ENCODE measurements at regions of chr6 and their contacts with region 1.

Region 1: DNA sequence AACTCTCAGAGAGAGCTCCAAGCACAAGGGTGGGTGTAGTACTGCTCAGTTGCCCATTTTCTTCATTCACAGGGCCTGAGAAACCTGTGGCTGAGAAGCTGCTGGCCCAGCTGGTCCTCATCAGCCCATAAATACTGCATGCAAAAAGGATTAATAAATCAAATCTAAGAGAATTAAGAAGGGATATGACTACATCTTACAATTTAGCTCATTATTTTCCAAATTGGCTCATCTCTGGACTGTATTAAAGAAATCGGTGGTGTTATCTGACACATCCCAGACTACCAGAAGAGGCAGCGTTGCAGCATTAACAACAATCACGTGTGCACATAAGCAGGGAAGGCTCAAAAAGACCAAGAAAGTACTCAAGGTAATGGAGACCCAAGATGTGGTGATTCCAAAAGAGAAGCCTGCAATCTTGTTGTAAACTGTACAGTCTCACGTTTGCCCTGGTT is 90.7 kb downstream of the CD24 start:
- DNase-seq: peak; percentile 36
- ATAC-seq: peak; percentile 48
- H3K4me3 ChIP-seq: no peak overlapping the region
- H3K27ac ChIP-seq: no peak overlapping the region
- H3K4me1 ChIP-seq: peaks cover 50% of the 10 kb centered on the region
- H3K27me3 ChIP-seq: no peaks in the 10 kb centered on the region; a peak in 1 of 5 replicates
- CTCF ChIP-seq: peak; percentile 49
- EP300 ChIP-seq: no peak
- POLR2A ChIP-seq: no peak
- RAD21 ChIP-seq: no peak

Region 2: DNA sequence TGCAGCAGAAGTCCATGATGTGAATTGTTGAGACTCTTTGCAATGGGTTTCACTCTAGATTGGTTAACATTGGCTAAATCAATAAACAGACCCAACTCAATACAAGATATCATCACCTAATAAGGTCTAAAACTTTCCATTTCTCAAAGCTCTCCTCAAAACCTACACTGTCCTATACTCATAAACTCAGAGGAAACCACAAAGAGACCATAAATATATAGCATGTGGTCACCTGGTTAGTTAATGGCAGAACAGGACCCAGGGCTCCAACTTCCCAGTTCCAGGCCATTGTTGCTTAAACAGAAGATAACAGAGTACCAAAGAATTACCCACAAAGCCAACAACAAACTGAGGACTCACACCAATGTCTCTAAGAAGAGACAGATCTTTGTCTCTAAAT is 266.5 kb before region 1 on chr6:
- CTCF ChIA-PET with region 1: no interaction called
- POLR2A ChIA-PET with region 1: no interaction called
- in situ Hi-C with region 1: no loop called
- intact Hi-C with region 1: no loop called
- DNase-seq: no peak
- ATAC-seq: no peak
- H3K4me3 ChIP-seq: no peak overlapping the region
- H3K27ac ChIP-seq: no peak overlapping the region
- H3K4me1 ChIP-seq: peaks cover 52% of the 10 kb centered on the region
- H3K27me3 ChIP-seq: no peaks in the 10 kb centered on the region
- CTCF ChIP-seq: no peak
- EP300 ChIP-seq: no peak
- POLR2A ChIP-seq: no peak
- RAD21 ChIP-seq: no peak

Region 3: DNA sequence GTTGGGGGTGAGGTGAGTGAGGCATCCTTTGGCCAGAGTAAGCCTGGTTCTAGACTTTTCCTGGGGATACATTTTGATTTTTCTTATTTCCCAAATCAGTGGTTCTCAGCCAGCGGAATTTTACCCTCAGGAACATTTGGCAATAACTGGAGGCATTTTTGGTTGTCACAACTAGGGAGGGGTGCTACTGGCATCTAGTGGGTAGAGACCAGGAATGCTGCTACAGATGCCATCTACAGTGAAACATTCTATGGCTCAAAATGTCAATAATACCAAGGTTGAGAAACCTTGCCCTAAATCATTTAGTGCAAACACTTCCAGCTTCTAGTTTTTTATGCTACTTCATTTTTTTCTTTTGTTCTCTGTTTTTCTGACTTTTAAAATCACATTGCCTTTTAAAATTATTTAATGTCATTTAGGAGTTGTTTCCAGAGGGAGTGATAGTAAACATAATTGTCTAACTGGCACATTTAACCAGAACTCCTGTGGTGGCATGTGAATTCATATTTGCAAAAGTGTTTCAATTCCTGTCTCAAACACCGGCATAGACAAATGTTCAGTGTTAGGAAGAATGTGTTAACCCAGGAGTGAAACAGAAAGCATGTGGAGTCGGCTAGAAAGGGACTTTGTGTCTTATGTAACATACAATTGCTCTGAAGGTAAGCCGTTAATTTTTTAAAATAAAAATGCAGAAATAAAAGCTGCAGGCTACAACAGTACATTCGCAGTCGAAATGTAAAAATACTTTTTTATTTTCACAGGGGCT is 195.5 kb before region 1 on chr6:
- CTCF ChIA-PET with region 1: no interaction called
- POLR2A ChIA-PET with region 1: no interaction called
- in situ Hi-C with region 1: no loop called
- intact Hi-C with region 1: loop called (anchors 10 kb)
- DNase-seq: peak; percentile 63
- ATAC-seq: peak; percentile 78
- H3K4me3 ChIP-seq: peak overlapping the region in 2 of 3 experiments; percentile 34 to 55; a peak in 3 of 6 replicates
- H3K27ac ChIP-seq: peak overlapping the region; percentile 46
- H3K4me1 ChIP-seq: peaks cover 15% of the 10 kb centered on the region
- H3K27me3 ChIP-seq: no peaks in the 10 kb centered on the region
- CTCF ChIP-seq: peak; percentile 50
- EP300 ChIP-seq: no peak
- POLR2A ChIP-seq: no peak
- RAD21 ChIP-seq: 0 out of 2 replicates have a peak, but pooled peaks have one; percentile 13

Region 4: DNA sequence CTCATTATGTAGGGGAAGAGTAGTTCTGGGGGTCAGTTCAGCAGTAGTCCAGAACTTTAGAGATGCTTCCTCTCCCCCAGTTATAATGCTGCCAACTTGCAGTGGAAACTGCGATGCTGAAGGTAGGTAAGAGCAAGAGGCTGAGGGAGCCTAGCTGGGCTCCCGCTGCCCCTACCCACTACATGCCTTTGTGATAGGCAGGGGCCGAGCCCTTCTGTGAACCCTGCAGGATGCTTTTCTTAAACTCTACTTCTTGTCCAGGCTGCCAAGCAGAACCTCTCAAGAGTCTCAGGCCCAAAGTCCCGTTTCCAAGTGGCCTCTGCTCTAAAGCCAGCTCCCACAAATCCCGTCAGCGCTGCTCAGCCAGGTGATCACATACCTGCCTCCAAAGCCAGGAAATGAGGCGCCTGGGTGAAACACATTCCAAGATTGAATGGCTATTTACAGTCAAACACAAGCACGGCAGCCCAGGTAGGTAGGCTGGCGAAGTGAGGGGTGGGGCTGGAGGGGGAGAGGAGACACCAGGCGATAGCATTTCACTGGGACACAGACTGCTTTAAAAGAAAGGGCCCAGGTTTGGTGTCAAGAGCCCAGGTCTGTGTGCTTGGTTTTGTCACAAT is 60.0 kb before region 1 on chr6:
- CTCF ChIA-PET with region 1: no interaction called
- POLR2A ChIA-PET with region 1: no interaction called
- in situ Hi-C with region 1: no loop called
- intact Hi-C with region 1: no loop called
- DNase-seq: no peak
- ATAC-seq: no peak
- H3K4me3 ChIP-seq: no peak overlapping the region
- H3K27ac ChIP-seq: no peak overlapping the region
- H3K4me1 ChIP-seq: no peaks in the 10 kb centered on the region
- H3K27me3 ChIP-seq: no peaks in the 10 kb centered on the region; a peak in 1 of 5 replicates
- CTCF ChIP-seq: no peak
- EP300 ChIP-seq: no peak
- POLR2A ChIP-seq: no peak
- RAD21 ChIP-seq: no peak

Region 5: GRCh38 chr6:106897580-106897979 is 13.7 kb after region 1 on chr6:
- CTCF ChIA-PET with region 1: no interaction called
- POLR2A ChIA-PET with region 1: interaction called, 13 read pairs
- in situ Hi-C with region 1: no loop called
- intact Hi-C with region 1: no loop called
- DNase-seq: peak; percentile 77
- ATAC-seq: peak; percentile 89
- H3K4me3 ChIP-seq: no peak overlapping the region; a peak in 1 of 6 replicates
- H3K27ac ChIP-seq: no peak overlapping the region
- H3K4me1 ChIP-seq: peaks cover 51% of the 10 kb centered on the region
- H3K27me3 ChIP-seq: peaks cover 0 to 3% of the 10 kb centered on the region in 2 experiments; a peak in 1 of 5 replicates
- CTCF ChIP-seq: no peak
- EP300 ChIP-seq: peak in 1 of 2 experiments; percentile 77; a peak in 2 of 4 replicates
- POLR2A ChIP-seq: no peak
- RAD21 ChIP-seq: no peak

Region 6: GRCh38 chr6:106913676-106914280 is 29.9 kb after region 1 on chr6:
- CTCF ChIA-PET with region 1: no interaction called
- POLR2A ChIA-PET with region 1: no interaction called
- in situ Hi-C with region 1: no loop called
- intact Hi-C with region 1: loop called (anchors 1 kb)
- DNase-seq: peak; percentile 64
- ATAC-seq: no peak
- H3K4me3 ChIP-seq: no peak overlapping the region
- H3K27ac ChIP-seq: no peak overlapping the region
- H3K4me1 ChIP-seq: peaks cover 43% of the 10 kb centered on the region
- H3K27me3 ChIP-seq: no peaks in the 10 kb centered on the region
- CTCF ChIP-seq: no peak
- EP300 ChIP-seq: no peak
- POLR2A ChIP-seq: no peak
- RAD21 ChIP-seq: no peak